Esophagus muscularis mucosa (tissue), 4 donors: ENCODE measurements at regions of chr2 and their contacts with region 1.

Region 1: DNA sequence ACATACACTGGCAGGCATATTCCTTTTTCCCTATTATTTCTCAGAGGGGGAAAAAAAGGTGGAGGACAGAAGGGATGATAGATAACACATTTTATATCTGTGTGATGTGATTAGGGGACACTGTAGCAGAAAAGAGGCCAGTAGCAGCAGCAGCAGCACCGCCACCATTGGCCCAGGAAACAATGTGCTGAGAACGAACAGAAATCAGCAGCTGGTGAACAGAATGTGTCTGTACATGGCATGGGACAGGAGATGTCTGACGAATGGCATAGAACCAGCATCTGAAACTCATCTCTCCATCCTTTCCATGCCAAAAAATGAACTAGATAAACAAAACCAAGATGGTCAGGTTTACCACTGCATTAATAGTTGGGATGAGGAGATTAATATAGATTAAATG is 936.1 kb upstream of the ACVR2A start:
- DNase-seq: no peak
- H3K4me3 ChIP-seq: no peak overlapping the region
- H3K27ac ChIP-seq: no peak overlapping the region
- H3K4me1 ChIP-seq: no peaks in the 10 kb centered on the region
- H3K27me3 ChIP-seq: no peaks in the 10 kb centered on the region
- CTCF ChIP-seq: no peak
- EP300 ChIP-seq: no peak
- POLR2A ChIP-seq: no peak

Region 2: GRCh38 chr2:146806299-146807005 is 102.3 kb before region 1 on chr2:
- intact Hi-C with region 1: no loop called
- DNase-seq: no peak
- H3K4me3 ChIP-seq: no peak overlapping the region
- H3K27ac ChIP-seq: no peak overlapping the region
- H3K4me1 ChIP-seq: no peaks in the 10 kb centered on the region
- H3K27me3 ChIP-seq: no peaks in the 10 kb centered on the region
- CTCF ChIP-seq: no peak
- EP300 ChIP-seq: no peak
- POLR2A ChIP-seq: no peak

Region 3: DNA sequence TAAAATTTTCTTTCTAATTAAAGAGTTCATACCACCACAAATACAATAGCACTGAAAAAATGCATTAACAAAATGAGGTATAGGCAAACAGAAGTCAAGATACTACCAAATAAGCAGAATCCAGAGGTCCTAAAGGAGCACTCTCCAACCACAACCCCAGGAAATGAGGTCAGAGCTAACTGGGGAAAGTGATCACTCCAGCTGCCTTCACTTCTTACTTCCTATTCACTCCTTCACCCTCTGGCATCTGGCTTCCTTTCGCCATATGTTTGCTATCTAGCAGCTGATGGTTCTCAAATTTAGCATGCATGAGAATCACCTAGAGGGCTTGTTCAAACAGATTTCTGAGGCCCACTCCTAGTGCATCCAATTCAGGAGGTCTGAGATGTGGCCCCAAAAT is 723.4 kb after region 1 on chr2:
- intact Hi-C with region 1: loop called (anchors 5 kb)
- DNase-seq: no peak
- H3K4me3 ChIP-seq: no peak overlapping the region
- H3K27ac ChIP-seq: no peak overlapping the region
- H3K4me1 ChIP-seq: peaks cover 3 to 27% (median 21%) of the 10 kb centered on the region in 4 donors
- H3K27me3 ChIP-seq: no peaks in the 10 kb centered on the region
- CTCF ChIP-seq: no peak
- EP300 ChIP-seq: no peak
- POLR2A ChIP-seq: no peak